Naive thymus-derived CD4-positive, alpha-beta T cell (primary cell): ENCODE measurements at regions of chr6 and their contacts with region 1.

Region 1: DNA sequence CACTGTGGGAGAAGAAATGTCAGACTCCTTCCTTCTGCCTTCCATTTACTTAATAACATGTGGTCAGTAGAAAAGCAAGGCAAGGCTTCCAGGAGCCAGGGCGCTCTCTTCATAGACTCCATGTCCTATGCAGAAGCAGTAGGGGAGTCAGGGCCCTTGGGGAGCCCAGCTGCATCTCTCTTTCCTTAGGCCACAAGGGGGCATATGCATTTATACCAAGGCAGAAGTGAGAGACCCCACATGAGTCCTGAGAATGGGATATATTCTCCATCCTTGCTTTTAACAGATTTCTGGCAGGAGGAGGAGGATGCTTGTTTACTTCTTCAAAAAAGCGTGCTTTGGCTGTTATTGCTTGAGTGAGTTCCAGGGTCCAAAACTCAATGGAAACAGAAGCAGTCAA is 198.5 kb downstream of the HIVEP2 start:
- DNase-seq: peak in 7 of 9 donors; percentile 16 to 49 (median 31)
- ATAC-seq: peak; percentile 69
- H3K4me3 ChIP-seq: no peak overlapping the region
- H3K4me3 Mint-ChIP-seq: no peak overlapping the region
- H3K27ac ChIP-seq: no peak overlapping the region
- H3K27ac Mint-ChIP-seq: peak overlapping the region in 2 of 9 donors; percentile 26 to 60
- H3K4me1 ChIP-seq: no peaks in the 10 kb centered on the region
- H3K4me1 Mint-ChIP-seq: peaks cover 0 to 30% (median 17%) of the 10 kb centered on the region in 7 donors
- H3K27me3 ChIP-seq: no peaks in the 10 kb centered on the region
- H3K27me3 Mint-ChIP-seq: peaks cover 0 to 4% (median 0%) of the 10 kb centered on the region in 5 donors

Region 2: GRCh38 chr6:141088171-141088570 is 1658.4 kb before region 1 on chr6:
- CTCF ChIA-PET with region 1: no interaction called
- POLR2A ChIA-PET with region 1: no interaction called
- intact Hi-C with region 1: no loop called
- DNase-seq: no peak
- ATAC-seq: no peak
- H3K4me3 ChIP-seq: no peak overlapping the region
- H3K4me3 Mint-ChIP-seq: no peak overlapping the region
- H3K27ac ChIP-seq: no peak overlapping the region
- H3K27ac Mint-ChIP-seq: no peak overlapping the region
- H3K4me1 ChIP-seq: no peaks in the 10 kb centered on the region
- H3K4me1 Mint-ChIP-seq: no peaks in the 10 kb centered on the region
- H3K27me3 ChIP-seq: no peaks in the 10 kb centered on the region
- H3K27me3 Mint-ChIP-seq: no peaks in the 10 kb centered on the region

Region 3: GRCh38 chr6:142400495-142400894 is 346.0 kb before region 1 on chr6:
- CTCF ChIA-PET with region 1: no interaction called
- POLR2A ChIA-PET with region 1: no interaction called
- intact Hi-C with region 1: no loop called
- DNase-seq: no peak
- ATAC-seq: no peak
- H3K4me3 ChIP-seq: no peak overlapping the region
- H3K4me3 Mint-ChIP-seq: no peak overlapping the region
- H3K27ac ChIP-seq: no peak overlapping the region
- H3K27ac Mint-ChIP-seq: peak overlapping the region in 4 of 9 donors; percentile 4 to 16 (median 14)
- H3K4me1 ChIP-seq: peaks cover under 1 to 6% of the 10 kb centered on the region in 2 donors
- H3K4me1 Mint-ChIP-seq: peaks cover 8 to 63% (median 41%) of the 10 kb centered on the region in 7 donors
- H3K27me3 ChIP-seq: no peaks in the 10 kb centered on the region
- H3K27me3 Mint-ChIP-seq: peaks cover 0 to 69% (median 0%) of the 10 kb centered on the region in 5 donors

Region 4: DNA sequence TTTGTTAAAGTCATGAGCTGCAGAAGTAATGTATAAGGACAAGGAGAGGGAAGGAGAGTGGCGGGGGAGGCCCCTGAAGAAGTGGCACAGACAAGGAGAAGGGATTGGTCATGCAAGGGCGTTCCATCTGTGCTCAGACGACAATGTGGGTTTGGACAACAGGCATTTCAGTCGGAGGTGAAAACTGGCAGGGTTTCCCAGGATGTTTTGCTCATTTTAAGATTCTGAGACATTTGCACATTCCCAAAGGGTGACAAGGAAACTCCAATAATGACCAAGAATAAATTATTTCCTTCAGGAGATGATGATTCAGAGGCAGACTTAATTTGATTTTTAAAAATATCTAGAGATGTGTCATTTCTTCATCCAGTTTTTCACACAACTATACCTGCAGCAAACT is 16.7 kb after region 1 on chr6:
- CTCF ChIA-PET with region 1: interaction called, 3 read pairs
- POLR2A ChIA-PET with region 1: no interaction called
- intact Hi-C with region 1: loop called in 1 of 2 experiments (anchors 2 kb)
- DNase-seq: no peak
- ATAC-seq: no peak
- H3K4me3 ChIP-seq: no peak overlapping the region
- H3K4me3 Mint-ChIP-seq: no peak overlapping the region
- H3K27ac ChIP-seq: peak overlapping the region; percentile 23
- H3K27ac Mint-ChIP-seq: peak overlapping the region in 7 of 9 donors; percentile 58 to 87 (median 75)
- H3K4me1 ChIP-seq: peaks cover 4 to 6% of the 10 kb centered on the region in 2 donors
- H3K4me1 Mint-ChIP-seq: peaks cover 4 to 69% (median 51%) of the 10 kb centered on the region in 7 donors
- H3K27me3 ChIP-seq: no peaks in the 10 kb centered on the region
- H3K27me3 Mint-ChIP-seq: no peaks in the 10 kb centered on the region

Region 5: GRCh38 chr6:142952614-142953013 is 206.1 kb after region 1 on chr6:
- CTCF ChIA-PET with region 1: interaction called, 4 read pairs
- POLR2A ChIA-PET with region 1: no interaction called
- intact Hi-C with region 1: loop called (anchors 1 to 2 kb)
- DNase-seq: no peak
- ATAC-seq: peak; percentile 26
- H3K4me3 ChIP-seq: no peak overlapping the region
- H3K4me3 Mint-ChIP-seq: no peak overlapping the region
- H3K27ac ChIP-seq: peak overlapping the region; percentile 23
- H3K27ac Mint-ChIP-seq: peak overlapping the region in 8 of 9 donors; percentile 17 to 94 (median 76)
- H3K4me1 ChIP-seq: no peaks in the 10 kb centered on the region
- H3K4me1 Mint-ChIP-seq: peaks cover 15 to 46% (median 29%) of the 10 kb centered on the region in 7 donors
- H3K27me3 ChIP-seq: no peaks in the 10 kb centered on the region
- H3K27me3 Mint-ChIP-seq: peaks cover 0 to 4% (median 0%) of the 10 kb centered on the region in 5 donors

Region 6: DNA sequence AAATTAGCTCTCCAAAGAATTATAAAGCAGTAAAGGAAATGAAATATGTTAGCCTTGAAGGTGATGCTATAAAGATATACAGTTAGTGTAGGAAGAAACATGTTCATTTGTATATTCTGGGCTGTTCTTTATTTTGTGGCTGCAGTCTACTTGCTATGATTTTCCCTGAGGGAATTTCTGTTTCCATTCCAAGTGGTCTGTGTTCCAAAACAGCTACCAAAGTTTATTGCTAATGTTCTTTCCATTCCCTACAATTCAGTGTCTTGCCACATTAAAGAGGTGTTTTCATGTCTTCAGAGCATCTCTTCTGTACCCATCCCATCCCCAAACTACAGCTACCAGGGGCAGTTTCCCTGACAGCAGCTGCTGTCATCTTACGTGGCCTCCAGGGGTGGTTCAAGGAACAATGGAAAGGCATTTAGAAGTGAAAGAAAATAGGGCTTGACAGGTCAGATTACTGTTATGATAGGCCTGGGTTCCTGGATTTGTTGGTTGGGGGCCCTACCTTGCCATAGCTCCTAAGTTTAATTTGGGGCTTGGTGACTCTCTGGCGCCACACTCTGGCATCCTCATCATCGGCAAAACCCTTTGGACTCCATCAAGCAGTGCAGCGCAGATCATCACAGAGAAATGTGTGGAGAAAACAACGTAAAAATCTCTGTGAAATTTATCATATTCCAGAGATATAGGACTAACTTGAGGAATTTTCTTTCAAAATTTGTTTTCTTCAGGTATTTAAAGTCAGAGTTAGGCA is 280.3 kb after region 1 on chr6:
- CTCF ChIA-PET with region 1: no interaction called
- POLR2A ChIA-PET with region 1: no interaction called
- intact Hi-C with region 1: loop called in 1 of 2 experiments (anchors 5 kb)
- DNase-seq: peak in 7 of 9 donors; percentile 3 to 47 (median 34)
- ATAC-seq: peak; percentile 76
- H3K4me3 ChIP-seq: no peak overlapping the region
- H3K4me3 Mint-ChIP-seq: no peak overlapping the region
- H3K27ac ChIP-seq: no peak overlapping the region
- H3K27ac Mint-ChIP-seq: peak overlapping the region in 3 of 9 donors; percentile 28 to 76 (median 53)
- H3K4me1 ChIP-seq: no peaks in the 10 kb centered on the region
- H3K4me1 Mint-ChIP-seq: peaks cover 0 to 5% (median 0%) of the 10 kb centered on the region in 7 donors
- H3K27me3 ChIP-seq: no peaks in the 10 kb centered on the region
- H3K27me3 Mint-ChIP-seq: no peaks in the 10 kb centered on the region

Region 7: DNA sequence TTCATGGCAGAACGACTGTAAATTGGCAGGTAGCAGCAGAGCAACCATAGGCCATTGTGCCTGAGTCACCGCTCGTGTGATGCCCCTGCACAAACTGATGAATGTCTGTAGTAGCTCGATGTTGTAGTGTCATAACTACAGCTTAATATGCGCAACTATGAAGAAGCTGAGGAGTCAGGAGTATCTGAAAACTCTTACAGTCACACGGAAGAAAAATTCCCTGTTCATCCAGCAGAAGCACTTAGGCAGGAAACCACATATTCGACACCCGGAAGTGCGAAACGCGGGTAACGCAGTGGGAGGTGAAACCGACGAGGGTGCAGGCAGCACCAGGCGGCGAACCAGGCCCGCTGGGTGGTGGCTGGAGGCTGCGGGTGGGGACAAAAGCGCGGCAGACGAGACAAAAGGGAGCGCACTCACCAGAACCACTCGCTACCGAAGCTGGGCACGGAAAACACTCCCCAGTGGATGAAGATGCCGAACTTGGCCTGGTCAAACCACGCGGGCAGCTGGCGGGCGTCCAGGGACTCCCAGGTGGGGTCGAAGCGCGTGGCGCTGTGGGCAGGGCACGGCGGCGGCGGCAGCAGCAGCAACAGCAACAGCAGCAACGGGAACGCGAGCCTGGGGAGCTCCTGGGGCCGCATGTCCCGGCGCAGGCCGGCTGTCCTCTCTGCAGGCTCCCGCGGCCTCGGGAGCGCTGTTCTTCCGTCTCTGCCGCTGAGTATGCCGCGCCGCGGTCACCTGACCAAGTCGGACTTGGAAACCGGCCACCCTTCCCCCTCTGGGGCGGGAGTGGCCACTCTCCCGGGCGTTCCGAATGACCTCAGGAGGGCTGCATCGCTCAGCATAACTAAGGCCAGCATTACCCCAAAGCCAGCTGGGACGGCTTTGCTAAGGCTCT is 764.7 kb after region 1 on chr6 and contains the start of gene FUCA2:
- CTCF ChIA-PET with region 1: no interaction called
- POLR2A ChIA-PET with region 1: no interaction called
- intact Hi-C with region 1: no loop called
- DNase-seq: peak; percentile 35 to 72 (median 63)
- ATAC-seq: peak; percentile 82
- H3K4me3 ChIP-seq: peak within 1 kb of the TSS; percentile 74
- H3K4me3 Mint-ChIP-seq: peak within 1 kb of the TSS; percentile 87 to 97 (median 92)
- H3K27ac ChIP-seq: peak within 1 kb of the TSS; percentile 69
- H3K27ac Mint-ChIP-seq: peak within 1 kb of the TSS; percentile 79 to 97 (median 89)
- H3K4me1 ChIP-seq: peaks cover 0 to 4% of the 10 kb centered on the region in 2 donors
- H3K4me1 Mint-ChIP-seq: peaks cover 14 to 43% (median 19%) of the 10 kb centered on the region in 7 donors
- H3K27me3 ChIP-seq: no peaks in the 10 kb centered on the region
- H3K27me3 Mint-ChIP-seq: no peaks in the 10 kb centered on the region
- total RNA-seq, gene FUCA2: 5.3 to 14.9 (median 6.7) TPM